Mammary epithelial cell (primary cell): ENCODE measurements at regions of chr4 and their contacts with region 1.

Region 1: GRCh38 chr4:88284439-88285234 is at the start of gene PPM1K:
- DNase-seq: peak; percentile 99
- H3K4me3 ChIP-seq: peak within 1 kb of the TSS; percentile 62 to 80 (median 79)
- H3K27ac ChIP-seq: peak within 1 kb of the TSS; percentile 82
- H3K4me1 ChIP-seq: peaks cover 8% of the 10 kb centered on the region
- H3K27me3 ChIP-seq: no peaks in the 10 kb centered on the region
- CTCF ChIP-seq: peak in 1 of 2 donors; percentile 26
- total RNA-seq, gene PPM1K: 10.2 to 13.6 TPM

Region 2: GRCh38 chr4:88366460-88366859 is 81.8 kb after region 1 on chr4:
- CTCF ChIA-PET with region 1: no interaction called
- dilution Hi-C with region 1: loop called (anchors 5 kb)
- in situ Hi-C with region 1: no loop called
- intact Hi-C with region 1: loop called (anchors 5 kb)
- DNase-seq: no peak
- H3K4me3 ChIP-seq: no peak overlapping the region
- H3K27ac ChIP-seq: no peak overlapping the region
- H3K4me1 ChIP-seq: no peaks in the 10 kb centered on the region
- H3K27me3 ChIP-seq: no peaks in the 10 kb centered on the region
- CTCF ChIP-seq: no peak

Region 3: GRCh38 chr4:88523325-88524129 is 238.9 kb after region 1 on chr4 and contains the start of gene PYURF:
- CTCF ChIA-PET with region 1: no interaction called
- dilution Hi-C with region 1: no loop called
- in situ Hi-C with region 1: no loop called
- intact Hi-C with region 1: loop called (anchors 5 kb)
- DNase-seq: peak; percentile 92
- H3K4me3 ChIP-seq: peak within 1 kb of the TSS; percentile 92 to 99 (median 94)
- H3K27ac ChIP-seq: peak within 1 kb of the TSS; percentile 78
- H3K4me1 ChIP-seq: peaks cover 11% of the 10 kb centered on the region
- H3K27me3 ChIP-seq: no peaks in the 10 kb centered on the region
- CTCF ChIP-seq: peak in 1 of 2 donors; percentile 8
- total RNA-seq, gene PYURF: 48.7 to 65.1 TPM

Region 4: GRCh38 chr4:88659055-88659889 is 374.6 kb after region 1 on chr4:
- CTCF ChIA-PET with region 1: no interaction called
- dilution Hi-C with region 1: no loop called
- in situ Hi-C with region 1: no loop called
- intact Hi-C with region 1: loop called (anchors 2 kb)
- DNase-seq: peak; percentile 82
- H3K4me3 ChIP-seq: no peak overlapping the region
- H3K27ac ChIP-seq: peak overlapping the region; percentile 43
- H3K4me1 ChIP-seq: peaks cover 24% of the 10 kb centered on the region
- H3K27me3 ChIP-seq: no peaks in the 10 kb centered on the region
- CTCF ChIP-seq: peak; percentile 95